Aorta (tissue), 5 donors: ENCODE measurements at regions of chrX and their contacts with region 1.

Region 1: GRCh38 chrX:118495061-118495921 is at the start of gene DOCK11:
- DNase-seq: peak; percentile 92
- ATAC-seq: peak; percentile 90
- H3K4me3 ChIP-seq: peak within 1 kb of the TSS; percentile 29 to 70
- H3K27ac ChIP-seq: peak within 1 kb of the TSS in 1 of 2 donors; percentile 96
- H3K4me1 ChIP-seq: no peaks in the 10 kb centered on the region
- H3K27me3 ChIP-seq: no peaks in the 10 kb centered on the region
- total RNA-seq, gene DOCK11: 44.6 to 59.8 TPM

Region 2: DNA sequence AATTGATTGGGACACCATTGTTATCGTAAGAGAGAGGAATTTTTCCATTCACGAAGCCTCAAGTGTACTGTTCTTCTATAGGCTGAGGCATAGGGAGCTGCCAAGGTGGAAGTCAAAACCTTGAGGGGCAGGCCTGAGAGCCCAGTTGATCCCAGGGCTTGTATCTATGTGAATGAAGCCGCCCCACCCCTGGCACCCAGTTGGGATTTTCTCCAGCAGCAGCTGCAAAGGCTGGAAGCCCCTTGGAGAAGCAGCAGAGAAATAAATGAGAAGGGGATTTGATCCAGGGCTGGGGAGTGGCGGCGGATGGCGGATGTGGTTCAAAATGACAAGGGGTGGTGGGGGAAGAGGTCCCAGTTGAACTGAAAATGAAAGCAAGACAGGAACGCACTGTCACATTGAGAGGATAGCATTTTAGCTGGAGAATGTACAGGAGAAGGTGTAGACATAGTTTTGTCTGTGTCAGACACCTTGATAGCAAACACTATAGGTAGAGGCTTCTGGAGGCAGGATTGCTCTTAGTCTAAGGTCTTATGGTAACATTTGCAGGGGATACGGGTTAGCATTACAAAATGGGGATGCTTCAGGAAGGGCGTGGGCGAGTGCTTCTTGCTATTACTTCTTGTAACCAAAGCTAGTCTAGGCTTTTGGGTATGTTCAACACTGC is 32.9 kb after region 1 on chrX:
- intact Hi-C with region 1: no loop called
- DNase-seq: no peak
- ATAC-seq: no peak
- H3K4me3 ChIP-seq: no peak overlapping the region
- H3K27ac ChIP-seq: peak overlapping the region in 1 of 2 donors; percentile 33
- H3K4me1 ChIP-seq: peaks cover 0 to 3% of the 10 kb centered on the region in 2 donors
- H3K27me3 ChIP-seq: no peaks in the 10 kb centered on the region

Region 3: DNA sequence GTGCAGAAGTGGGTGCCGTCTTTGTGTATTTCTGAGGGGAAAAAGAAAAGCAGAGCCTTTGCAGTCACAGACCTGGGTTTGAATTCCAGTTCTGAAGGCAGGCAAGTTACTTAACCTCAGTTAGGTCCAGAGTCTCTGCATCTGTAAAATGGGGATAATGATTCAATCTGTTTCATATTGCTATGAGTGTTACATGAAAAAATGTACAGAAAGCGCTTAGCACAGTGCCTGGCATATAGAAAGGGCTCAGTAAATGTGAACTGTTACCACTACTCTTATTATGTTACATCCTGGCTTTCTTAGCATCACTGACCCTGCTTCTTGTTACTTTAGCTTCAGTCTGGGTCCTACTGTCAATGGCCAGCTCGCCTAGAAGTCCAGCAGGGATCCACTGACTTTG is 46.2 kb after region 1 on chrX:
- intact Hi-C with region 1: loop called in 1 of 2 experiments (anchors 5 kb)
- DNase-seq: no peak
- ATAC-seq: no peak
- H3K4me3 ChIP-seq: no peak overlapping the region
- H3K27ac ChIP-seq: no peak overlapping the region
- H3K4me1 ChIP-seq: peaks cover 0 to 3% of the 10 kb centered on the region in 2 donors
- H3K27me3 ChIP-seq: no peaks in the 10 kb centered on the region

Region 4: DNA sequence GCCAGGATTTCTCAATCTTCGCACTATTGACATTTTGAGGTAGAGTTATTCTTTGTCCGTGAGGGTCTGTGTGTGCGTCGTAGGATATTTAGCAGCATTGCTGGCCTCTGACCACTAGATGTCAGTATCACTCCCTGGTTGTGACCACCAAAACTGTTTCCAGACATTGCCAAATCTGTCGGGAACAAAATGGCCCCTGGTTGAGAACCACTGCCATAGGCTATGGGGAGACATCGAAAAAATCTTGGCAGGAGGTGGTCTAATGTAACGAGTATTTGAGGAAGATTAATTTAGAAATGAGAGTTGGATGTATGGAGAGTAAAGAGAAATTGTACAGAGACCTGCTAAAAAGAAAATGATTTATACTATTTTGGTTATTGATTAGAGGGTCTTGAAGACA is 108.7 kb after region 1 on chrX:
- intact Hi-C with region 1: loop called in 1 of 2 experiments (anchors 10 kb)
- DNase-seq: no peak
- ATAC-seq: peak; percentile 88
- H3K4me3 ChIP-seq: no peak overlapping the region
- H3K27ac ChIP-seq: no peak overlapping the region
- H3K4me1 ChIP-seq: no peaks in the 10 kb centered on the region
- H3K27me3 ChIP-seq: no peaks in the 10 kb centered on the region